ENCODE measurements at regions of chr6 and their contacts with region 1.

Region 1: GRCh38 chr6:26103770-26104456 is 16.7 kb downstream of the HFE start:
- DNase-seq: peak; percentile 90
- ATAC-seq: peak; percentile 87
- H3K4me3 Mint-ChIP-seq: peak overlapping the region; percentile 85
- H3K27ac Mint-ChIP-seq: peak overlapping the region; percentile 98
- H3K4me1 Mint-ChIP-seq: peaks cover 15% of the 10 kb centered on the region
- H3K27me3 Mint-ChIP-seq: peaks cover 2% of the 10 kb centered on the region
- CTCF ChIP-seq: peak; percentile 46

Region 2: GRCh38 chr6:26087284-26088115 is 16.4 kb before region 1 on chr6 and contains the start of gene HFE:
- CTCF ChIA-PET with region 1: interaction called, 91 read pairs
- POLR2A ChIA-PET with region 1: interaction called, 20 read pairs
- intact Hi-C with region 1: no loop called
- DNase-seq: peak; percentile 41
- ATAC-seq: peak; percentile 22
- H3K4me3 Mint-ChIP-seq: peak within 1 kb of the TSS; percentile 74
- H3K27ac Mint-ChIP-seq: peak within 1 kb of the TSS; percentile 69
- H3K4me1 Mint-ChIP-seq: peaks cover 33% of the 10 kb centered on the region
- H3K27me3 Mint-ChIP-seq: no peaks in the 10 kb centered on the region
- CTCF ChIP-seq: no peak
- total RNA-seq, gene HFE: 0.25 to 0.56 TPM

Region 3: GRCh38 chr6:26115226-26115625 is 11.3 kb after region 1 on chr6:
- CTCF ChIA-PET with region 1: interaction called, 5 read pairs
- POLR2A ChIA-PET with region 1: interaction called, 39 read pairs
- intact Hi-C with region 1: no loop called
- DNase-seq: no peak
- ATAC-seq: no peak
- H3K4me3 Mint-ChIP-seq: no peak overlapping the region
- H3K27ac Mint-ChIP-seq: no peak overlapping the region
- H3K4me1 Mint-ChIP-seq: peaks cover 10% of the 10 kb centered on the region
- H3K27me3 Mint-ChIP-seq: peaks cover 4% of the 10 kb centered on the region
- CTCF ChIP-seq: no peak

Measured in activated CD8-positive, alpha-beta T cell treated with anti-CD3 and anti-CD28 coated beads for 36 hours (primary cell).